CD4-positive, alpha-beta memory T cell (primary cell): ENCODE measurements at regions of chr10 and their contacts with region 1.

Region 1: DNA sequence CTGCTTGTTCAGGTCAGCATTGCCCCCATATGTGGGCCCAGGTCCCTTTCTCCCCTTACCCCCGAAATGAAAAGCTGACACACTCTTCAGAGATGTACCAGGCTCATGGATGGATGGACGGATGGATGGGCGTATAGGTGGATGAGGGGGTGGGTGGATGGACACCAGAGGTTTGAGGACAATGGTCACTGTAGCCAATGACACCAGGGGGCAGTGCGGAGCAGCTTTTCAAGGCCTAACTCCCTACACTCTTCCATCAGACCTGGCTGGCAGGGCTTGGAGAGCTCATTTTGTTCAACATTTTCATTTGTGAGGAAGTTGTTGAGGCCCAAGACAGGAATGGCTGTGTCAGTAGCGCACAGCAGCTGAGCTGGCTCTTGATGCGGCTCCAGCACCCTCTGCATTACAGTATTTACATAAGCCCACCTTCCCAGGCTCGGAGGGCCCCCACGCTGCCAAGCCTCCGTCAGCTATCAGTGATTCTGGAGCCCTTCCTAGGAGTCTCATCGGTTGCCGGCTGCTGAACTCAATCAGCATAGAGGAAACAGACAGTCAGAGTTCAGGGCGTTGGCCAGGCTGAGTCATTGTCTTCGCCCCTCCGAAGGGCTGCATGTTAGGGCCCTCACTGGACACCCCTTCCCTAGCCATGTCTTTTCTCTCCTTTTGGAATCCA is 11.6 kb upstream of the FFAR4 start:
- DNase-seq: peak in 3 of 5 donors; percentile 6 to 16 (median 10)
- H3K4me3 ChIP-seq: no peak overlapping the region
- H3K4me3 Mint-ChIP-seq: no peak overlapping the region
- H3K27ac ChIP-seq: no peak overlapping the region
- H3K27ac Mint-ChIP-seq: no peak overlapping the region
- H3K4me1 ChIP-seq: no peaks in the 10 kb centered on the region
- H3K4me1 Mint-ChIP-seq: peaks cover 0 to 2% (median 0%) of the 10 kb centered on the region in 4 donors
- H3K27me3 ChIP-seq: no peaks in the 10 kb centered on the region
- H3K27me3 Mint-ChIP-seq: peaks cover 9 to 13% of the 10 kb centered on the region in 2 donors

Region 2: DNA sequence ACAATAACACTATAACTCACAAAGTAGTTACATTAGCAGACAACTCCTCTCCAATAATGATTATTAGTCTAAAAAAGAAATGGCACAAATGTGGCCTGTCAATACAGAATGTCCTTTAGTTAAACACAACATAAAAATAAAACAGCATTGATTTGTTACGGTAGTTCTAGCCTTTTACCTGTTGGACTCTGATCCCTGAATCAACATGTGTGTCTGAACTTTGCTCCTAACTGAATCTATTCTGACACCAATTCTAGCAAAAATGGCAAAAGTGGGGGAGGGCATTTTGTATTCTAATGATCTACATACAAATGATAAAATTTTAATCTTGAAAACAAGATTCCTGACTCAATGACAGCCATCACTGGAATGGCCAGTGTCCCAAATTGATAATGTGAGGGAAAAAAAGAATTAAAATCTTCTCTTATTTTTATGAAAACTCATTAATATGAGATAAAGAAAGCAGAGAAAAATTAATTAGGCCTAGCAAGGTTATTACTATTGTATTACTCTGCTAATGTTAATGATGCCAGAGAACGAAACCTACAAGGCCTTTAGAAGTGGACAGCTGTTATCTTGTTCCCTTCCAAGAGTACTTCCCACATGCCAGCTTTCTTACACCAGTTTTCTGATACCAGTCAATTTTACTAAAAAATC is 117.3 kb after region 1 on chr10:
- CTCF ChIA-PET with region 1: no interaction called
- POLR2A ChIA-PET with region 1: no interaction called
- intact Hi-C with region 1: loop called (anchors 10 kb)
- DNase-seq: no peak
- H3K4me3 ChIP-seq: no peak overlapping the region
- H3K4me3 Mint-ChIP-seq: no peak overlapping the region
- H3K27ac ChIP-seq: no peak overlapping the region
- H3K27ac Mint-ChIP-seq: peak overlapping the region in 1 of 7 donors; percentile 79
- H3K4me1 ChIP-seq: no peaks in the 10 kb centered on the region
- H3K4me1 Mint-ChIP-seq: peaks cover 0 to 7% (median 1%) of the 10 kb centered on the region in 4 donors
- H3K27me3 ChIP-seq: no peaks in the 10 kb centered on the region
- H3K27me3 Mint-ChIP-seq: no peaks in the 10 kb centered on the region

Region 3: DNA sequence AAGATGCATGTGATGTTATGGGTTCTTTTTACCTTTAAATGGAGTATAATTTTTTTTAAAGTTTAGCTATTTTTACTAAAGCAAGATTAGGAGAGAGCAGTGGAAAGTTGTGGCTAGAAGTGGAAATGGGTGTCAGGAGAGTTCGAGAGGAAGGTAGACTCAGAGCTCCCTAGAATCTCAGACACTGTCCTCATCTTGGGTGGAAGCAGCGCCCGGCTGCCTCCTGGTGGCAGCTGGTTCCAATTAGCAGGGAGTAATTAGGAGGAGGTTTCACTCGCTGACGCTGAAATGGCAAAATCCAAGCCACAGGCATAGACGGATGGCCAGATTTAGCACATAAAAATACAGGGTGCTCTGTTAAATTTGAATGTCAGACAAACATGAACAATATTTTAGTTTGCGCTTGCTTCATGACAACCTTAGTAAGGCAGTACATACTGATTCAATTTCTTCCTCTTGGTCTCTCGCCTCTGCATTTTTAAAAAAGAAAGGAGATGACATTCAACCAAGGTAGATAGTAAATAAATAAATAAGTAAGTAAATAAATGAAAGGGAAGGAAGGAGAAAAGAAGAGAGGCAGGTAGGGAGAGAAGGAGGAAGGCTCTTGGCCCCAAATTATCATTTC is 261.3 kb after region 1 on chr10:
- CTCF ChIA-PET with region 1: interaction called, 14 read pairs
- POLR2A ChIA-PET with region 1: no interaction called
- intact Hi-C with region 1: no loop called
- DNase-seq: peak in 4 of 5 donors; percentile 9 to 16 (median 10)
- H3K4me3 ChIP-seq: no peak overlapping the region
- H3K4me3 Mint-ChIP-seq: no peak overlapping the region
- H3K27ac ChIP-seq: no peak overlapping the region
- H3K27ac Mint-ChIP-seq: no peak overlapping the region
- H3K4me1 ChIP-seq: no peaks in the 10 kb centered on the region
- H3K4me1 Mint-ChIP-seq: peaks cover 0 to 3% (median 0%) of the 10 kb centered on the region in 4 donors
- H3K27me3 ChIP-seq: no peaks in the 10 kb centered on the region
- H3K27me3 Mint-ChIP-seq: peaks cover 22 to 33% of the 10 kb centered on the region in 2 donors

Region 4: GRCh38 chr10:93873427-93874115 is 318.7 kb after region 1 on chr10:
- CTCF ChIA-PET with region 1: no interaction called
- POLR2A ChIA-PET with region 1: no interaction called
- intact Hi-C with region 1: no loop called
- DNase-seq: no peak
- H3K4me3 ChIP-seq: no peak overlapping the region
- H3K4me3 Mint-ChIP-seq: no peak overlapping the region
- H3K27ac ChIP-seq: no peak overlapping the region
- H3K27ac Mint-ChIP-seq: no peak overlapping the region
- H3K4me1 ChIP-seq: no peaks in the 10 kb centered on the region
- H3K4me1 Mint-ChIP-seq: no peaks in the 10 kb centered on the region
- H3K27me3 ChIP-seq: no peaks in the 10 kb centered on the region
- H3K27me3 Mint-ChIP-seq: peaks cover 20 to 34% of the 10 kb centered on the region in 2 donors